AG04450 (cell line): ENCODE measurements at regions of chr1 and their contacts with region 1.

Region 1: DNA sequence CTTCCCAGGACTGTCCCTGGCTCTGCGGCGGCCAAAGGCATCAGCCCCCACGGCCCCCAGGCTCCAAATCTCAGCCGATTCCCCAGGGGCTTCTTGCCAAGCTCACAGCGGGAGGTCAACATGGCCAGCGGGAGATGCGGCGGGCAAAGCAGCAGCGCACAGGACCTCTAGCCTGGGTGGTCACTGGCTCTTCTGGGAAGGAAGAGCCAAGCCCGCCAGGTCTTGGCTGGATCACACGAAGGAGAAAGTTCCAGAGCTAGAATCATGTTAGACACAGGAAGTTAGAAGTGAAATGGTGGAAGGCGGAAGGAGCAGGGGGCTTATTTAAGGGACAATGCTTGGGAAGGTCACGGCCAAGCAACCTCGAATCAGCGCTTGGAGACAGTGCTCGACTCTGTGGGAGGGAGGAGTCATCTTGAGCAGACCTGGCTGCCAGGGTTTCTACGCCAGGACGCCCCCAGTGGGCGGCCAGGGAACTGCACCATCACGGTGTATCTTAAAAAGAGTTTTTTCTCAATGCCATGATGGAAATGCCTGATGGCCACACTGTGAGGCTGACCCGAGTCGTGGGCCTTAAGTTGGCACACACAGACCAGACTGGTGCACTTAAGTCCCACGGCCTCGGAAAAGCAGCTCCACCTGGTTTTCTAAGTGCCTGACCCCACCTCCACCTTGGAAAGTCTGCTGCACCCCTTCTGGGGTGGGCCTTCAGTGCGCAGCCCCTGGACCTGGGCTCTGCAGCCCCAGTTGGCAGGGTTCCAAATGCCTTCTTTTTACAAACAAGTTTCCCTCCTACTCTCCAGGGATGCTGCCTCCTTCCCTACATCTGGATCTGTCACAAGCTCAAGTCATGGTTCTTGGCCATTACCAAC is 29.3 kb downstream of the SLC66A1 start:
- DNase-seq: peak; percentile 33
- H3K4me3 ChIP-seq: no peak overlapping the region
- H3K27ac ChIP-seq: no peak overlapping the region
- H3K27me3 ChIP-seq: no peaks in the 10 kb centered on the region
- CTCF ChIP-seq: peak; percentile 87

Region 2: DNA sequence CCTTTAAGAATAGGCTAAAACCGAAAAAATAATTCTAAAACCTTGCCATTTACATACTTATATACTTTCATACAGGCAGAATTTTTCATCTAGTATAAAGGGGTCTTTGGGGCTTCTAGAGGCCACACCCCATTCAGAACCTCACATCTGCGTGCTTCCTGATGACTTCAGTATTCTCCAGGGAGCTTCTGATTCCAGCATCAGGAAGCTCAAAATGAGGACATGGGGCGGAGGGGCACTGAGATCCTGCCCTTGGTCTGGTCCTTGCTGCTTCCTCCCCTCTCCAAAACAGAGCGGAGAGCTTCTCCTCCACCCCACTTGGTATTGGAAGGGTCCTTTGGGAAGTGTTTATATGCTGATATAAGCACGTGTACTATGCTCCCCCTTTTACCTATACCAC is 697.0 kb before region 1 on chr1:
- CTCF ChIA-PET with region 1: interaction called, 11 read pairs
- POLR2A ChIA-PET with region 1: no interaction called
- DNase-seq: no peak
- H3K4me3 ChIP-seq: no peak overlapping the region
- H3K27ac ChIP-seq: no peak overlapping the region
- H3K27me3 ChIP-seq: peaks cover 89% of the 10 kb centered on the region
- CTCF ChIP-seq: no peak

Region 3: DNA sequence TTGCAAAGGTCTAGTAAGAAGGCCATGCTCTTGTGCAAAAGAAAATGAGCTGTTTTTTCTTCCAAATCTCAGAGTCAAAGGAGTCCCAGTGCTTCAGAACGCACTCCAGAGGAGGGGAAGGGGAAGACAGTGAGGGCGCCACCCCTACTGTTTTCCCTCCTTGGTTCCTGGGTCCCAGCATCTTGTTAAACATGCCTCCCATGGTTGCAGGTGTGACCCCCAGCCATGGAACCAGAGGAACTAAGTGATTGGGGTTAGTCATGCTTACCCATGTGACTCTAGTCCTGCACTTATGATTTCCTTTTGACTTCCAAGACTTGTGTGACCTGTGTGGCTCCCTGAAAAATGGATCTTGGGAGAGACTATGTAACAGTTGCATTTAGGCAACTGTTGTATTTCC is 46.8 kb before region 1 on chr1:
- CTCF ChIA-PET with region 1: no interaction called
- POLR2A ChIA-PET with region 1: no interaction called
- DNase-seq: no peak
- H3K4me3 ChIP-seq: no peak overlapping the region
- H3K27ac ChIP-seq: no peak overlapping the region
- H3K27me3 ChIP-seq: no peaks in the 10 kb centered on the region
- CTCF ChIP-seq: no peak

Region 4: DNA sequence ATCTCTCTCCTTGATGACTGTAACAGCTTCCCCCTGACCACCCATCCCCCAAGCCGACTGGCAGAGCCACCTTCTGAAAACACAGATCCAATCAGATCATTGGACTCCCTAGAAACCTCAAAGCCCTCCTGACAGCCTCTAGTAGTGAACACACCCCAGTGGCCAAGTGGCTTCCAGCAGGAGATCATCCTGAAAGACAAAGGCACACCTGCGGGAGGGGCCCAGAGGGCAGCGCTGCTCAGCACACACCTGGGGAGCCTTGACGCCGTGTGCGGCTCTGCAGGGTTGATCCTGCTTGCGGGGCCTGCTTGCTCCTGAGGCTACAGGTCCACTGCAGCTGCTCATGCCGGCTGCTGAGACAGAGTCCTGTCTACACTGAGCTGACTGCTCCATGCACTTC is 12.2 kb after region 1 on chr1:
- CTCF ChIA-PET with region 1: interaction called, 10 read pairs
- POLR2A ChIA-PET with region 1: no interaction called
- DNase-seq: no peak
- H3K4me3 ChIP-seq: no peak overlapping the region
- H3K27ac ChIP-seq: no peak overlapping the region
- H3K27me3 ChIP-seq: no peaks in the 10 kb centered on the region
- CTCF ChIP-seq: no peak